ENCODE measurements at regions of chr2 and their contacts with region 1.

Region 1: GRCh38 chr2:224284134-224284946 is 117.6 kb downstream of the FAM124B start:
- DNase-seq: peak; percentile 23
- H3K4me3 ChIP-seq: no peak overlapping the region
- H3K27ac ChIP-seq: no peak overlapping the region
- H3K27me3 ChIP-seq: no peaks in the 10 kb centered on the region
- CTCF ChIP-seq: peak; percentile 62

Region 2: GRCh38 chr2:223993621-223994232 is 290.6 kb before region 1 on chr2:
- in situ Hi-C with region 1: loop called (anchors 25 kb)
- DNase-seq: peak; percentile 73
- H3K4me3 ChIP-seq: no peak overlapping the region
- H3K27ac ChIP-seq: no peak overlapping the region
- H3K27me3 ChIP-seq: no peaks in the 10 kb centered on the region
- CTCF ChIP-seq: peak; percentile 83